Activated naive CD4-positive, alpha-beta T cell treated with anti-CD3 and anti-CD28 coated beads, Interleukin-2, amount 10 ng/mL, durations not matched to agents 7 days and 5 days (primary cell): ENCODE measurements at regions of chr16 and their contacts with region 1.

Region 1: GRCh38 chr16:57413301-57413730 is 8.7 kb downstream of the CCL17 start:
- DNase-seq: no peak
- H3K4me3 Mint-ChIP-seq: no peak overlapping the region
- H3K27ac Mint-ChIP-seq: no peak overlapping the region
- H3K4me1 Mint-ChIP-seq: peaks cover 12% of the 10 kb centered on the region
- H3K27me3 Mint-ChIP-seq: peaks cover 22% of the 10 kb centered on the region

Region 2: GRCh38 chr16:57084257-57084770 is 329.0 kb before region 1 on chr16:
- CTCF ChIA-PET with region 1: interaction called, 10 read pairs
- DNase-seq: peak; percentile 81
- H3K4me3 Mint-ChIP-seq: no peak overlapping the region
- H3K27ac Mint-ChIP-seq: peak overlapping the region; percentile 70
- H3K4me1 Mint-ChIP-seq: peaks cover 8% of the 10 kb centered on the region
- H3K27me3 Mint-ChIP-seq: peaks cover 16% of the 10 kb centered on the region

Region 3: DNA sequence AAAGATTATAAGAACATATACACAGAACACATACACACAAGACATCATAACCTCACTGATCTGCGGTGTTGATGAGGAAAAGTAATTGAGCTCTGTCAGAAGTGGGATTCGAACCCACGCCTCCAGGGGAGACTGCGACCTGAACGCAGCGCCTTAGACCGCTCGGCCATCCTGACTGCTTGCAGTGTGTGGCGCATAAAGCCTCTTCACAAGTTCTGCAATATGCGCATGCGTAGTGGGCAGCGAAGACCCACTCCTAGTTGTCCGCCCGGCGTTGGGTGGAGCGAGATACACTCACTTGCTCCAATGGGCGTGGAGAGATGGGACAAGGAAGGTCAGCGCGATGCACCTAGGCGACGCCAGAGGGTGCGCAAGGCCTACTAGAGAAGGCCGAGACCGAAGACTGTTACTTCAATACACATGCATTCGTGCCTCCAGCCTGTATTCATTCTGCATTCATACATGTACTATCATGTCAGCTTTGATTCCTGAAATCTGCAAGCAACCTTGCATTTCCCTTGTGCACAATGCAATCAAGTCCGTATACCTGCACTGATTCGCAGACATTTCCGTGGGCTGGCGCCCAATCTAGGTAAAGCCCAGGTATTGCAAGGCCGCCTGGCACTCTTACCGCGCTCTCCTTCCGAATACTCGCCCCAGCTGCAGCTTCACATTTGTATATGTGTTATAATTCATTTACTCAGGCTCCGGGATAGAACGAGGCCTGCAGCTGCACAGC is 112.8 kb before region 1 on chr16:
- CTCF ChIA-PET with region 1: interaction called, 161 read pairs
- DNase-seq: peak; percentile 99
- H3K4me3 Mint-ChIP-seq: no peak overlapping the region
- H3K27ac Mint-ChIP-seq: no peak overlapping the region
- H3K4me1 Mint-ChIP-seq: peaks cover 26% of the 10 kb centered on the region
- H3K27me3 Mint-ChIP-seq: peaks cover 32% of the 10 kb centered on the region

Region 4: GRCh38 chr16:57314161-57314785 is 99.0 kb before region 1 on chr16:
- CTCF ChIA-PET with region 1: interaction called, 13 read pairs
- DNase-seq: no peak
- H3K4me3 Mint-ChIP-seq: no peak overlapping the region
- H3K27ac Mint-ChIP-seq: peak overlapping the region; percentile 76
- H3K4me1 Mint-ChIP-seq: peaks cover 16% of the 10 kb centered on the region
- H3K27me3 Mint-ChIP-seq: peaks cover 15% of the 10 kb centered on the region

Region 5: DNA sequence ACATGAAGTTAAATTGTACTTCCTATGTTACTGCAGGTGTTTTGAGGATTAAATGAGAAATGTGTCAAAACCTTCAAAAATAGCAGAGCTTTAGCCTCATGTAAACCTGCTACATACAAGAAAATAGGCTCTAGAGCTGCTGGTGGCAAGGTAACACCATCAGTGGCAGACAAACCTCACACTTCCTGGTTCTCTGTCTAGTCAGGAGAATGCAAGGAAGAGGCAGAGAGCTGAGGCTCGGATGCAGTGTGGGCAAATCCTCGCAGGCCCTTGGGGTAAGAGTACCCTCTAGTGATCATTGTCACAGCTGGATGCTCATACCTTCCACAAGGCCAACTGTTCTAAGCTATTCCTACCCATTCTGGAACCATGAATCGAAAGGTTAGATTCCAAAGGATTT is 19.7 kb after region 1 on chr16:
- CTCF ChIA-PET with region 1: interaction called, 23 read pairs
- DNase-seq: no peak
- H3K4me3 Mint-ChIP-seq: no peak overlapping the region
- H3K27ac Mint-ChIP-seq: peak overlapping the region; percentile 10
- H3K4me1 Mint-ChIP-seq: peaks cover 23% of the 10 kb centered on the region
- H3K27me3 Mint-ChIP-seq: no peaks in the 10 kb centered on the region

Region 6: GRCh38 chr16:57447186-57447962 is 34.1 kb after region 1 on chr16 and contains the starts of genes CIAPIN1 and COQ9:
- CTCF ChIA-PET with region 1: interaction called, 25 read pairs
- DNase-seq: peak; percentile 97
- H3K4me3 Mint-ChIP-seq: peak within 1 kb of the TSS; percentile 94
- H3K27ac Mint-ChIP-seq: peak within 1 kb of the TSS; percentile 89
- H3K4me1 Mint-ChIP-seq: peaks cover 38% of the 10 kb centered on the region
- H3K27me3 Mint-ChIP-seq: no peaks in the 10 kb centered on the region

Region 7: GRCh38 chr16:57530104-57530521 is 116.8 kb after region 1 on chr16:
- CTCF ChIA-PET with region 1: interaction called, 25 read pairs
- DNase-seq: peak; percentile 86
- H3K4me3 Mint-ChIP-seq: peak overlapping the region; percentile 58
- H3K27ac Mint-ChIP-seq: peak overlapping the region; percentile 95
- H3K4me1 Mint-ChIP-seq: peaks cover 63% of the 10 kb centered on the region
- H3K27me3 Mint-ChIP-seq: no peaks in the 10 kb centered on the region

Region 8: GRCh38 chr16:57834936-57835335 is 421.6 kb after region 1 on chr16:
- CTCF ChIA-PET with region 1: no interaction called
- DNase-seq: no peak
- H3K4me3 Mint-ChIP-seq: no peak overlapping the region
- H3K27ac Mint-ChIP-seq: no peak overlapping the region
- H3K4me1 Mint-ChIP-seq: no peaks in the 10 kb centered on the region
- H3K27me3 Mint-ChIP-seq: peaks cover 27% of the 10 kb centered on the region